Naive thymus-derived CD4-positive, alpha-beta T cell (primary cell): ENCODE measurements at regions of chr12 and their contacts with region 1.

Region 1: DNA sequence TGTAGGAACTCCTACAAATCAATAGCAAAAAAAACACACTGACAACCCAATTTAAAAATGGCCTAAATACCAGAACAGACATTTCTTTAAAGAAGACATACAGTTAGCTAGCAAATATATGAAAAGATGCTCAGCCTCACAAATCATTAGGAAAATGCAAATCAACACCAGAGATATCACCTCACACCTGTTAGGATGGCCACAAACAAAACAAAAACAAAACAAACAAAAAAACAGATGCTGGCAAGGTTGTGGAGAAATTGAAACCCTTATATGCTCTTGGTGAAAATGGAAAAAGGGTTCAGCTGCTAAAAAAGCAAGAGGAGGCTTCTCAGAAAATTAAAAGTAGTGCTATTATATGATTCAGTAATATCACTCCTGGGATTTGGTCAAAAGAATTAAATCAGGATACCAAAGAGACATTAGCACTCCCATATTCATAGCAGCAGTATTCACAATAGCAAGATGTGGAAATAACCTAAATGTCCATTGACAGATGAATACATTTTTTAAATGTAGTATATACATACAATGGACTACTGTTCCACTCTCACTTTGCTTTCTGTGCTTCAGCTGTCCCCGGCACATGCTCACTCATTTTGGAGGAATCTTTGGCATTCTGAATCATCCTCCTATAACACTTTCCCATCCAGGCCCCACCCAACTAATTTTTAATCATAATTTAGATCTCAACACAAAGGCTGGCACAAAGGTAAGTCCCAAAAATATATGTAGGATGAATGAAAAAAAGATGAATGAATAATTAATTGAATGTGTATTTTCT is 99.1 kb downstream of the SYT1 start:
- DNase-seq: no peak
- ATAC-seq: no peak
- H3K4me3 ChIP-seq: no peak overlapping the region
- H3K4me3 Mint-ChIP-seq: no peak overlapping the region
- H3K27ac ChIP-seq: no peak overlapping the region
- H3K27ac Mint-ChIP-seq: no peak overlapping the region
- H3K4me1 ChIP-seq: no peaks in the 10 kb centered on the region
- H3K4me1 Mint-ChIP-seq: no peaks in the 10 kb centered on the region
- H3K27me3 ChIP-seq: no peaks in the 10 kb centered on the region
- H3K27me3 Mint-ChIP-seq: no peaks in the 10 kb centered on the region

Region 2: DNA sequence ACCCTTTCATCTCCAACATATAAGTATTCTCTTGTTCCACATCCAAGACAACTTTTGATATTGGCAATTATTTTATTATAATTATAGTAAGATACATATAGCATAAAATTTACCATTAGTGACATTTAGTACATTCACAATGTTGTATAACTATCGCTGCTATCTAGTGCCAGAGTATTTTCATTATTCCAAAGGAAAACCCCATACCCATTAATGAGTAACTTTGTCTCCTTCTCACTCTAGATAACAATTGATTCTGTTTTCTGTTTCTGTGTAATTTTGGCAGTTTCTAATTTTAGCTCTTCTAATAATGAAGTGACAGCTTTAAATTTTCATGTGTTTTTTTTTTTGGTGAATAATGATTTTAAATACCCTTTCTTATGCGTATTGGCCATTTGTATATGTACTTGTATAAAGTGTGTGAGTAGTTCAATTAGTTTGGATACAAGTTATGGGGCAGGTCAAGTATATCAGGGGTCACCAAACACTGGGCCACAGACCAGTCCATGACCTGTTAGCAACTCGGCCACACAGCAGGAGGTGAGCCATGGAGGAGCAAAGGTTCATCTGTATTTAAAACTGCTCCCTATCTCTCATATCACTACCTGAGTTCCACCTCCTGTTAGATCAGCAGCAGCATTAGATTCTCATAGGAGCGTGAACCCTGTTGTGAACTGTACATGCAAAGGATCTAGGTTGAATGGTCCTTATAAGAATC is 196.2 kb before region 1 on chr12:
- CTCF ChIA-PET with region 1: no interaction called
- POLR2A ChIA-PET with region 1: no interaction called
- intact Hi-C with region 1: no loop called
- DNase-seq: no peak
- ATAC-seq: no peak
- H3K4me3 ChIP-seq: no peak overlapping the region
- H3K4me3 Mint-ChIP-seq: no peak overlapping the region
- H3K27ac ChIP-seq: no peak overlapping the region
- H3K27ac Mint-ChIP-seq: no peak overlapping the region
- H3K4me1 ChIP-seq: no peaks in the 10 kb centered on the region
- H3K4me1 Mint-ChIP-seq: no peaks in the 10 kb centered on the region
- H3K27me3 ChIP-seq: no peaks in the 10 kb centered on the region
- H3K27me3 Mint-ChIP-seq: no peaks in the 10 kb centered on the region

Region 3: GRCh38 chr12:78916845-78917480 is 46.7 kb before region 1 on chr12:
- CTCF ChIA-PET with region 1: no interaction called
- POLR2A ChIA-PET with region 1: no interaction called
- intact Hi-C with region 1: no loop called
- DNase-seq: no peak
- ATAC-seq: no peak
- H3K4me3 ChIP-seq: no peak overlapping the region
- H3K4me3 Mint-ChIP-seq: no peak overlapping the region
- H3K27ac ChIP-seq: no peak overlapping the region
- H3K27ac Mint-ChIP-seq: no peak overlapping the region
- H3K4me1 ChIP-seq: no peaks in the 10 kb centered on the region
- H3K4me1 Mint-ChIP-seq: no peaks in the 10 kb centered on the region
- H3K27me3 ChIP-seq: no peaks in the 10 kb centered on the region
- H3K27me3 Mint-ChIP-seq: no peaks in the 10 kb centered on the region

Region 4: GRCh38 chr12:78994168-78994791 is 30.6 kb after region 1 on chr12:
- CTCF ChIA-PET with region 1: no interaction called
- POLR2A ChIA-PET with region 1: no interaction called
- intact Hi-C with region 1: loop called in 1 of 2 experiments (anchors 1 kb)
- DNase-seq: no peak
- ATAC-seq: no peak
- H3K4me3 ChIP-seq: no peak overlapping the region
- H3K4me3 Mint-ChIP-seq: no peak overlapping the region
- H3K27ac ChIP-seq: no peak overlapping the region
- H3K27ac Mint-ChIP-seq: no peak overlapping the region
- H3K4me1 ChIP-seq: no peaks in the 10 kb centered on the region
- H3K4me1 Mint-ChIP-seq: no peaks in the 10 kb centered on the region
- H3K27me3 ChIP-seq: no peaks in the 10 kb centered on the region
- H3K27me3 Mint-ChIP-seq: no peaks in the 10 kb centered on the region